ENCODE measurements at regions of chr10 and their contacts with region 1.

Region 1: DNA sequence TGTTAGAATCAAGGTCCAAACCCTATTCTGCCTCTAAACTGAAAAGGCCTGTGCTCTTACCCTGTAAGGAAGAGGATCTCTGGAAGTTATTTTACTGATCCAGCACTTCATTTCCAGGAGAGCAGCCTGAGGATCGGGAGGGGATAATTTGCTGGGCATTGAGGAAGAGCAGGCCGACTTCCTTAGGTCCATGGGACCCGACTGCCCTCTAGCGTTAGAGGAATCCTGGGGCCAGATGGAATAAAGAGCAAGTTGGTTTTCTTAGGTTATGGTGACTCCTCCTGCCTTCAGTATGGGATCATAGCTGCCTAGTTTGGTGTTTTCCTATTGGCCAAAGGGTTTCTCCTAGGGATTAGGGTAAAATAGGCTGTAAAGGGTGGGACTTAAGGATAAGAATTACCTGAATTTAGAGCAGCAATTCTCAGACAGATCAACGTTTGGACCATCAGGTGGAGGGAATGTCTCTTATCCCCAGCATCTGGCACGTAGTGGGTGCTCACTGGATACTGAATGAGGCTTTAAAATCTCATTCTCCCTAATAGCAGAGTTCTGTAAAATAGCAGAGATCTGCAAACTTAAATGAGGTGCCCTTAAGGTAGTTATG is 40.0 kb upstream of the SORBS1 start:
- DNase-seq: peak; percentile 71
- H3K4me3 ChIP-seq: no peak overlapping the region
- H3K27ac ChIP-seq: peak overlapping the region; percentile 44
- H3K4me1 ChIP-seq: peaks cover 24% of the 10 kb centered on the region
- H3K27me3 ChIP-seq: no peaks in the 10 kb centered on the region
- CTCF ChIP-seq: peak; percentile 97

Region 2: GRCh38 chr10:95374597-95375209 is 226.5 kb before region 1 on chr10:
- intact Hi-C with region 1: loop called (anchors 5 kb)
- DNase-seq: peak; percentile 64
- H3K4me3 ChIP-seq: no peak overlapping the region
- H3K27ac ChIP-seq: peak overlapping the region; percentile 74
- H3K4me1 ChIP-seq: peaks cover 64% of the 10 kb centered on the region
- H3K27me3 ChIP-seq: no peaks in the 10 kb centered on the region
- CTCF ChIP-seq: peak; percentile 97

Region 3: GRCh38 chr10:95430231-95430951 is 170.8 kb before region 1 on chr10:
- intact Hi-C with region 1: loop called (anchors 5 kb)
- DNase-seq: no peak
- H3K4me3 ChIP-seq: no peak overlapping the region
- H3K27ac ChIP-seq: peak overlapping the region; percentile 92
- H3K4me1 ChIP-seq: peaks cover 100% of the 10 kb centered on the region
- H3K27me3 ChIP-seq: no peaks in the 10 kb centered on the region
- CTCF ChIP-seq: peak; percentile 97

Region 4: GRCh38 chr10:96017191-96017687 is 416.0 kb after region 1 on chr10:
- intact Hi-C with region 1: no loop called
- DNase-seq: no peak
- H3K4me3 ChIP-seq: no peak overlapping the region
- H3K27ac ChIP-seq: no peak overlapping the region
- H3K4me1 ChIP-seq: peaks cover 6% of the 10 kb centered on the region
- H3K27me3 ChIP-seq: no peaks in the 10 kb centered on the region
- CTCF ChIP-seq: peak; percentile 85

Region 5: DNA sequence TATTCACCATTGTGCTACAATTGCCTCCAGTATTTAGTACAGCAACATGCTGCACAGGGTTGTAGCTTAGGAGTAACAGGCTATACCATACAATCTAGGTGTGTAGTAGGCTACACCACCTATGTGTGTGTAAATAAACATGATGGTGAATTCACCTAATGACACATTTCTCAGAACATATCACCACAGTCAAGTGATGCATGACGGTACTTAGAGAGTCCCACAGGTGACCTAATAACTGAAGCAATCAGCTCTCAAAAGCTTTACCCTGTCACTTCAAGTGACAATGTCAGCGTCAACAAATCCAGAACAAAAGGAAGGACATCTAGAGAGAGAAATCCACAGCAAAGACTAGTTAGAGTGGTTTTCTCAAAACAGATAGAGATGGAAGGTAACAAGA is 480.9 kb after region 1 on chr10:
- intact Hi-C with region 1: no loop called
- DNase-seq: no peak
- H3K4me3 ChIP-seq: no peak overlapping the region
- H3K27ac ChIP-seq: no peak overlapping the region
- H3K4me1 ChIP-seq: peaks cover 11% of the 10 kb centered on the region
- H3K27me3 ChIP-seq: no peaks in the 10 kb centered on the region
- CTCF ChIP-seq: no peak

Measured in left ventricle myocardium inferior (tissue), 1 donor.